GM18951 (cell line): ENCODE measurements at regions of chr15 and their contacts with region 1.

Region 1: GRCh38 chr15:76866716-76867321 is 38.3 kb downstream of the SCAPER start:
- POLR2A ChIP-seq: no peak

Region 2: GRCh38 chr15:76190834-76191538 is 675.8 kb before region 1 on chr15:
- in situ Hi-C with region 1: loop called (anchors 25 kb)
- POLR2A ChIP-seq: no peak

Region 3: GRCh38 chr15:77040673-77041072 is 173.9 kb after region 1 on chr15:
- in situ Hi-C with region 1: no loop called
- POLR2A ChIP-seq: no peak

Region 4: DNA sequence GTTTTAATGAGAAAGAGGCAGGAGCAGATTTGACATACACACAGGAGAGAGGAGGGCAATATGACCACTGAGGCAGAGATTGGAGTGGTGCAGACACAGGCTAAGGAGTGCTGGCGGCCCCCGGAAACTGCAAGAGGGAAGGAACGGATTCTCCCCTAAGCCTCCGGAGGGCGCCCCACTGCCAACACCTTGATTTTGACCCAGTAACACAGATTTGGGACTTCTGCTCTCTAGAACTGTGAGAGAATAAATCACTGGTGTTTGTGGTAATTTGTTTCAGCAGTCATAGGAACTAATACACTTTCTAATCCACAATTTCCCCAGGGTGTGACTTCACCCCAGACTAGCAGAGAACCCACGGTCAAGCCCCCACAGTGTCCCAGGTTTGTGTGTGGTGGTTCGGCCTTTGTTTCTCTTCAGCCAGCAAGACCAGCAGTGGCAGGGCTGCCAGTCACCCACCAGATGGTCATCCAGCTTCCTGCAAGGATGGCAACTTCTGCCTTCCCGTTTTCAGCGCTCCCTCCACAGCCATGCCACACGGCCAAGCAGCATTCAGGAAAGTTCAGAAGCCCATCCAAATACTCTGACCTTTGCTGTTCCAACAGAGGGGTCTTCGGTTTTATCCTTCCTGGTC is 227.7 kb after region 1 on chr15:
- in situ Hi-C with region 1: no loop called
- POLR2A ChIP-seq: no peak

Region 5: GRCh38 chr15:77464129-77464865 is 597.5 kb after region 1 on chr15:
- in situ Hi-C with region 1: no loop called
- POLR2A ChIP-seq: no peak

Region 6: DNA sequence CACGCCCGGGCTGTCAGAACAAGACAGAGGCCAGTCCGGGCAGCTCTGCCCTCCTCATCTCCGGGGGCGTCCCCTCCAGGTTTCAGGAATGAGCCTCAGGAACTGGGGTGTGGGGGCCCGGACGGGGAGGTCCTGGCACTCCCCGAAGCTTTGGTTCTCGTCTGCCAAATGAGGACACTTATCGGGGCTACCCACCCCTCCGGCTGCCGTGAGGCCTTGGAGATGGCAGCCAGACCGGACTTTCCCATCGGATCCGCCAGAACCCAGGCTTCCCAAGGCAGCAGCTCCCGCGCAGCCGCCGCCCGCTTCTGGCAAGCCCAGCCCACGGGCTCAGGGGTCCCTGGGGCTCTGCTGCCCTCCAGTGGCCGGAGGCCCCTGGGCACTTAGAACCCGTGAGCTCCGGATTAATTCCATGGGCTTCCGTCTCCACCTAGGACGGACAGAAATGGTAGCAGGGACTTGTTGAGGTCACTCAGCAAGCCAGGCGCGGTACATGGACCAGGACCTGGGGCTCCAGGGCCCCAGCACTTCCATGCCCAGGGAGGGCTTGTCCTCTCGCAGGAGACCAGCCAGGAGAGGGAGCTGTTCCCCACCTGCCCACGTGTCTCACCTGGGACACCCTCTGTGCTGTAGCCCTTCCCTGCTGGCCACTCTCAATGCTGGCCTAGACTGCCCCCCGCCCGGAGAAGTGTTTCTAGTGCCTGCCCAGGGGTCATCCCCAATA is 676.5 kb after region 1 on chr15:
- in situ Hi-C with region 1: no loop called
- POLR2A ChIP-seq: peak; percentile 48